ENCODE measurements at regions of chr5 and their contacts with region 1.

Region 1: GRCh38 chr5:119070828-119071572 is at the start of gene DMXL1:
- DNase-seq: peak; percentile 100
- H3K4me3 ChIP-seq: peak within 1 kb of the TSS; percentile 84 to 91
- H3K27ac ChIP-seq: peak within 1 kb of the TSS; percentile 97 to 98
- H3K4me1 ChIP-seq: peaks cover 3% of the 10 kb centered on the region
- H3K27me3 ChIP-seq: no peaks in the 10 kb centered on the region
- CTCF ChIP-seq: peak in 1 of 4 experiments; percentile 8
- POLR2A ChIP-seq: peak; percentile 68
- total RNA-seq, gene DMXL1: 89.2 to 180 TPM

Region 2: GRCh38 chr5:119336845-119337580 is 266.0 kb after region 1 on chr5:
- intact Hi-C with region 1: loop called (anchors 5 kb)
- DNase-seq: no peak
- H3K4me3 ChIP-seq: no peak overlapping the region
- H3K27ac ChIP-seq: no peak overlapping the region
- H3K4me1 ChIP-seq: peaks cover 6% of the 10 kb centered on the region
- H3K27me3 ChIP-seq: no peaks in the 10 kb centered on the region
- CTCF ChIP-seq: no peak
- POLR2A ChIP-seq: no peak

Measured in prostate gland (tissue), 2 donors.